Ovary (tissue), 10 donors: ENCODE measurements at regions of chrX and their contacts with region 1.

Region 1: GRCh38 chrX:134898440-134898839 is 92.4 kb upstream of the SMIM10 start:
- DNase-seq: no peak
- H3K4me3 ChIP-seq: no peak overlapping the region
- H3K27ac ChIP-seq: no peak overlapping the region
- H3K4me1 ChIP-seq: peaks cover 1% of the 10 kb centered on the region
- H3K27me3 ChIP-seq: no peaks in the 10 kb centered on the region
- CTCF ChIP-seq: no peak
- EP300 ChIP-seq: no peak
- POLR2A ChIP-seq: no peak

Region 2: GRCh38 chrX:134807039-134807731 is 91.3 kb before region 1 on chrX:
- intact Hi-C with region 1: loop called in 1 of 4 experiments (anchors 10 kb)
- DNase-seq: peak; percentile 87 to 92 (median 90)
- H3K4me3 ChIP-seq: peak overlapping the region; percentile 53
- H3K27ac ChIP-seq: peak overlapping the region; percentile 79 to 89
- H3K4me1 ChIP-seq: no peaks in the 10 kb centered on the region
- H3K27me3 ChIP-seq: no peaks in the 10 kb centered on the region
- CTCF ChIP-seq: no peak
- EP300 ChIP-seq: no peak
- POLR2A ChIP-seq: peak; percentile 67